ENCODE measurements at regions of chr11 and their contacts with region 1.

Region 1: DNA sequence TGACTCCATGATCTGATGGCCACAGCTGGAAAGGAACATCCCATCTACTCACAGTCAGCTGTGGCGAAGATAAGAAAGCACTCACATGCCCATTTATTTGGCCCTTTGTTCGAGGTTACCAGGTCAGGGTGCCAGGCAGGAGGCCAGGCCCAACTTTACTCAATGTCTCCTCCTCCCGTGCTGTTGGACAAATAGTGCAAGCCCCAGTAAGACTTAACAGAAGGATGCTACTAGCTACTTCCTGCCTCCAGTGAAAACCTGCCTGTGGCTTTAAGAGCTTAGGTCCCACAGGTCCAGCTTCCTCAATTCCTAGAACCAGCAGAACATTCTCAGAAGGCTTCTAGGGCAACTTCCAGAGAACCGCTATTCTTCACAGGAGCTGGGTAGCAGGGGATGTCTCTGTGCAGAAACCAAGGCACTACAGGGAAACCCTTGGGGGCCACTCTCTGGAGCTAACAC is 12.9 kb upstream of the CRY2 start:
- DNase-seq: peak; percentile 44
- ATAC-seq: peak; percentile 98
- H3K4me3 Mint-ChIP-seq: peak overlapping the region; percentile 83
- H3K27ac Mint-ChIP-seq: peak overlapping the region; percentile 94
- H3K4me1 Mint-ChIP-seq: peaks cover 36% of the 10 kb centered on the region
- H3K27me3 Mint-ChIP-seq: peaks cover 14% of the 10 kb centered on the region

Region 2: DNA sequence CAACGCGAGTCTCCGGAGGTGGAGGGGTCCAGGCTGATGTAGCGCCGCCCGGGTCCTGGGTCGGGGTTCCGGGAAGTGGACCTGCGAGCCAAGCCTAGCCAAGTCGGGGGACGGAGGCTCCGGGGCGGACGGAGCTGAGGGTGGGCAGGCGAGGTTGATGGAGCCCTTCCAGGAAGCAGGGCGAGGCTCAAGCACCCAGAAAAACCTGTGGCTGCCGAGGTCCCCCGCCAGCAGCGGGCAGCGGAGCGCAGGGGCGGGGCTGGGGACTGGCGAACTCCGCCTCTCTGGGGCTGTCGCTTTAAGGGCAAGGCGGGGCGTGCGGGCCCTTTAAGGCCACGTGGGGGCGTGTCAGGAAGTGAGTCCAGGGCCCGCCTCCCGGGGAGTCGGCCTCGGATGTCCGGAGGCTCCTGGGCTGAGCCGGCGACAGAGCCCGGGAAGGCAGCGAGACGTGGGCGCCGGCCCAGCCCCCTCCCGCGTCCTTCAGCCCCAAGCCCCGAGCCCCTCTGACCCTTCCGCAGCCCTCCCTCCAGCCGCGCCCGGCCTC is 29.5 kb before region 1 on chr11 and contains the start of gene SLC35C1:
- POLR2A ChIA-PET with region 1: interaction called, 40 read pairs
- DNase-seq: peak; percentile 98
- ATAC-seq: peak; percentile 89
- H3K4me3 Mint-ChIP-seq: peak within 1 kb of the TSS; percentile 97
- H3K27ac Mint-ChIP-seq: peak within 1 kb of the TSS; percentile 92
- H3K4me1 Mint-ChIP-seq: peaks cover 35% of the 10 kb centered on the region
- H3K27me3 Mint-ChIP-seq: no peaks in the 10 kb centered on the region
- total RNA-seq, gene SLC35C1: 18.0 to 20.2 TPM

Region 3: GRCh38 chr11:45846974-45847910 is 12.9 kb after region 1 on chr11 and contains the start of gene CRY2:
- POLR2A ChIA-PET with region 1: interaction called, 27 read pairs
- DNase-seq: peak; percentile 96
- ATAC-seq: peak; percentile 90
- H3K4me3 Mint-ChIP-seq: peak within 1 kb of the TSS; percentile 88
- H3K27ac Mint-ChIP-seq: peak within 1 kb of the TSS; percentile 86
- H3K4me1 Mint-ChIP-seq: peaks cover 43% of the 10 kb centered on the region
- H3K27me3 Mint-ChIP-seq: peaks cover 14% of the 10 kb centered on the region
- total RNA-seq, gene CRY2: 32.4 to 36.9 TPM